Right cardiac atrium (tissue), 5 donors: ENCODE measurements at regions of chr1 and their contacts with region 1.

Region 1: DNA sequence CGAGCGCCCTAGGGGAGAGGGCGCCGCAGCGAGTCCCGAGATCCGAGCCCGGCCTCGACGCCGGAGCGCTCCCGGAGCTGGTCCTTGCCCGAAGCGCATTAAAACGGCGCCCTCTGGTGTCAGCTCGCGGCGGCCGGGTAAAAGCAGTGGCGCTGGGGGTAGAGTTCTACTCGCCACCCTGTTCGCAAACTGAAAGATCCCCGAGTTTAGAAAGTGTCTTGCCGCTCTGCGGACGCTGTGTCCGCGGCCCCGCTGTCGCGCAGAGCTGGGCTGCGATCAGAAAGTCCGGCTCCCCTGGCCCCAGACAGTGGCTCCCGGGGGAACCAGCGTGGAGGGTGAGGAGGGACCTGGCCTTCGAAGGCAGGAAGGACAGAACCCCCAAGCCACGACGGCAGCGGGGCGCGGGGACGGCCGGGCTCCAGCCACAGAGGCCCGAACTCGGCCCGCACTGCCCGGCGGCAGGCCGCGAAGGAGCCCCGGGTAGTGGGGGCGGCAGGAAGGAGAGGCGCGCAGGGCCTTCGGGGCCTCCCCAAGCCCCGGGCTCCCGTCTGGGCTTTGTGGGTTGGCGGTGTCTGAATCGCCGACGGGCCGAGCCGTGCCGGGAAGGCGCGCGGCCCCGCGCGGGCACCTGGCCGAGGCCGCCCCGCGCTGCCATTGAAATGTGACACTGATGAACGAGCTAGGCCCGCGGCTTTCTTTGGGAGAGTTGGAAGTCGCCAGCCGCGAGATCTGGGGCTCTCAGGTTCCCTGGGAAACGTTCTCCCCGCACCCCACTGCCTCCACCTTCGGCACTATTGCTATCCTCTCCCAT is 39.1 kb upstream of the NFIA start:
- DNase-seq: peak; percentile 92 to 97 (median 96)
- ATAC-seq: peak; percentile 96 to 97
- H3K4me3 ChIP-seq: peak overlapping the region; percentile 50
- H3K27ac ChIP-seq: peak overlapping the region; percentile 31
- H3K4me1 ChIP-seq: no peaks in the 10 kb centered on the region
- H3K27me3 ChIP-seq: no peaks in the 10 kb centered on the region

Region 2: GRCh38 chr1:60281360-60281932 is 761.8 kb before region 1 on chr1:
- intact Hi-C with region 1: loop called in 1 of 4 experiments (anchors 5 kb)
- DNase-seq: peak; percentile 51 to 66 (median 55)
- ATAC-seq: peak; percentile 94
- H3K4me3 ChIP-seq: no peak overlapping the region
- H3K27ac ChIP-seq: no peak overlapping the region
- H3K4me1 ChIP-seq: no peaks in the 10 kb centered on the region
- H3K27me3 ChIP-seq: no peaks in the 10 kb centered on the region

Region 3: GRCh38 chr1:60848583-60849188 is 194.5 kb before region 1 on chr1:
- intact Hi-C with region 1: loop called in 2 of 4 experiments (anchors 2 to 5 kb)
- DNase-seq: no peak
- ATAC-seq: no peak
- H3K4me3 ChIP-seq: no peak overlapping the region
- H3K27ac ChIP-seq: no peak overlapping the region
- H3K4me1 ChIP-seq: no peaks in the 10 kb centered on the region
- H3K27me3 ChIP-seq: no peaks in the 10 kb centered on the region

Region 4: GRCh38 chr1:60936163-60936562 is 107.1 kb before region 1 on chr1:
- intact Hi-C with region 1: no loop called
- DNase-seq: no peak
- ATAC-seq: peak in 1 of 2 donors; percentile 66
- H3K4me3 ChIP-seq: no peak overlapping the region
- H3K27ac ChIP-seq: no peak overlapping the region
- H3K4me1 ChIP-seq: no peaks in the 10 kb centered on the region
- H3K27me3 ChIP-seq: no peaks in the 10 kb centered on the region

Region 5: GRCh38 chr1:60969971-60970509 is 73.2 kb before region 1 on chr1:
- intact Hi-C with region 1: loop called (anchors 5 kb)
- DNase-seq: no peak
- ATAC-seq: peak; percentile 66 to 74
- H3K4me3 ChIP-seq: no peak overlapping the region
- H3K27ac ChIP-seq: no peak overlapping the region
- H3K4me1 ChIP-seq: no peaks in the 10 kb centered on the region
- H3K27me3 ChIP-seq: no peaks in the 10 kb centered on the region

Region 6: DNA sequence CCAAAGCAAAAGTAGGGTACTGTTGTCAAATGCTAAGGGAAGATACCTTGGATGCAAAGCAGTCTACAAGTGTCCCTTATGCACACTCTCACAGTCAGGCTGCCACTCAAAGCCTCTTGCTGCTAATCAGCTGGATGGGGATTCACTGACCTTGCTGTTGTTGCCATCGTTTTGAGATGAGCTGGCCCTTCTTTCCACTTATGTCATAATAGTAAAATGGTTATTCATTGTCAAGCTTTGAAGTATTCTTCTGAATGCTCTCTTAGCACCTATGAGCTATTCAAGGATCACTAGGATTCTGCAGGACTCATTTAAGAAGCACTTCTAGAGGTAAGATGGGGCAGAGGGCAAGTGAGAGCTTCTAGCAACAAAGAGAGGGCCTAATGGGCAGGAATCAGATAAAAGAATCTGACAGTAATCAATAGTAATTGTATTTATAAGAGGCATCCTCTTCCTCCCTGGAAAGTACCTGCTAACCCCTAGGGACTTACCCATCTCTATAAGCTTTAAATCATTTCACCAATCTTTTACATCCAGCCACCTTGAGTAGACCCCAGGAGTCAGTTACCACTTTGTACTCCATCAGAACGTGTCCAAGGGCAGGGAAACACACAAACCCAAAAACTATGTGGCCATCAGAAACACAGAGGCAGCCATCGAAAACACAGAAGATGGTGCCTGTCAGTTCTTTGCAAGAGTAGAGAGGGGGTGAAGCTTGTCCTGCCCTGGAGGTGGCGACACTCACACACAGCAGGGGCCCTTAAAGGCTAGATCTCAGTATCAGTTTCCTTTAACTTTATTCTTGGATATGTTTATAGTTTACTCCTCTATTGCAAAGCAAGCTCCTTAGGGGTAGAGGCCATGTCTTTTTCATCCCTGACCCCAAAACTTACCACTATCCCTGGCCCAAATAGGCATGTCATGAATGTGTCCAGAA is 64.5 kb before region 1 on chr1:
- intact Hi-C with region 1: loop called (anchors 5 kb)
- DNase-seq: peak in 1 of 3 donors; percentile 48
- ATAC-seq: peak; percentile 56 to 68
- H3K4me3 ChIP-seq: no peak overlapping the region
- H3K27ac ChIP-seq: no peak overlapping the region
- H3K4me1 ChIP-seq: no peaks in the 10 kb centered on the region
- H3K27me3 ChIP-seq: no peaks in the 10 kb centered on the region

Region 7: GRCh38 chr1:60984062-60984799 is 59.0 kb before region 1 on chr1:
- intact Hi-C with region 1: loop called in 2 of 4 experiments (anchors 5 kb)
- DNase-seq: peak; percentile 68 to 87 (median 84)
- ATAC-seq: peak; percentile 92 to 94
- H3K4me3 ChIP-seq: no peak overlapping the region
- H3K27ac ChIP-seq: peak overlapping the region; percentile 82
- H3K4me1 ChIP-seq: no peaks in the 10 kb centered on the region
- H3K27me3 ChIP-seq: no peaks in the 10 kb centered on the region